Gastrocnemius medialis (tissue), 4 donors: ENCODE measurements at regions of chr19 and their contacts with region 1.

Region 1: DNA sequence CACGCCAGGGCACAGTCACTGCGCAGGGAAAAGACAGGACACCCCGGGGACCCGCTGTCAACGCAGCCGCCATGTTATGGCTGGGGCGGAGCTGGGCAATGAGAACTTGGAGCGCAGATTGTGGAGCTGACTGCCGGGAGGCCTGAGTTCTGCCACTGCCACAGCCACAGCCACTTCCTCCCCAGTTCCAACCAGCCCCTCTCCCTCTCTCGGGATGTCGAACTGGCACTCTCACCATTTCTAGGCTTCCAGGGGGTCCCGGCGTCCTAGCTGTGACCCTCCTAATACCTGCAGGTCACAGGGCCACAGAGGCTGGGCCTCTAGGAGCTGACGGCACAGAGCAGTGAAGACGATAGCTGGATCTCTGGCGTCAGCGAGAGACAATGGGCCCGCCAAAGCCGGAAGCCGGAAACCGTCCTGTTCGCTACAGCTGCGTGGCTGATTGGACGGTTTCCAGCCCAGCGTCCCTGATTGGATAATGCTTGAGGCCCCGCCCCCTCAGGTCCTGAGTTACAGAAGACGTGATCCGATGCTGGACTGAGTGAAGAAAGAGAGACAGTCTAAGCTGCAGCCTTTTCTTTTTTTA is at the start of gene ZNF506:
- DNase-seq: peak; percentile 98
- ATAC-seq: peak; percentile 99
- H3K4me3 ChIP-seq: peak within 1 kb of the TSS; percentile 66 to 87 (median 77)
- H3K27ac ChIP-seq: peak within 1 kb of the TSS; percentile 90 to 93 (median 92)
- H3K4me1 ChIP-seq: peaks cover 3 to 10% of the 10 kb centered on the region in 2 donors
- H3K27me3 ChIP-seq: no peaks in the 10 kb centered on the region
- CTCF ChIP-seq: no peak
- POLR2A ChIP-seq: peak; percentile 66 to 83
- total RNA-seq, gene ZNF506: 6.3 to 18.7 (median 14.9) TPM

Region 2: GRCh38 chr19:19434483-19435045 is 386.9 kb before region 1 on chr19:
- in situ Hi-C with region 1: no loop called
- intact Hi-C with region 1: no loop called
- DNase-seq: peak; percentile 51 to 73
- ATAC-seq: peak; percentile 93 to 94
- H3K4me3 ChIP-seq: peak overlapping the region in 1 of 4 donors; percentile 25
- H3K27ac ChIP-seq: peak overlapping the region; percentile 47 to 63 (median 56)
- H3K4me1 ChIP-seq: peaks cover 22 to 25% of the 10 kb centered on the region in 2 donors
- H3K27me3 ChIP-seq: no peaks in the 10 kb centered on the region
- CTCF ChIP-seq: no peak
- POLR2A ChIP-seq: no peak

Region 3: DNA sequence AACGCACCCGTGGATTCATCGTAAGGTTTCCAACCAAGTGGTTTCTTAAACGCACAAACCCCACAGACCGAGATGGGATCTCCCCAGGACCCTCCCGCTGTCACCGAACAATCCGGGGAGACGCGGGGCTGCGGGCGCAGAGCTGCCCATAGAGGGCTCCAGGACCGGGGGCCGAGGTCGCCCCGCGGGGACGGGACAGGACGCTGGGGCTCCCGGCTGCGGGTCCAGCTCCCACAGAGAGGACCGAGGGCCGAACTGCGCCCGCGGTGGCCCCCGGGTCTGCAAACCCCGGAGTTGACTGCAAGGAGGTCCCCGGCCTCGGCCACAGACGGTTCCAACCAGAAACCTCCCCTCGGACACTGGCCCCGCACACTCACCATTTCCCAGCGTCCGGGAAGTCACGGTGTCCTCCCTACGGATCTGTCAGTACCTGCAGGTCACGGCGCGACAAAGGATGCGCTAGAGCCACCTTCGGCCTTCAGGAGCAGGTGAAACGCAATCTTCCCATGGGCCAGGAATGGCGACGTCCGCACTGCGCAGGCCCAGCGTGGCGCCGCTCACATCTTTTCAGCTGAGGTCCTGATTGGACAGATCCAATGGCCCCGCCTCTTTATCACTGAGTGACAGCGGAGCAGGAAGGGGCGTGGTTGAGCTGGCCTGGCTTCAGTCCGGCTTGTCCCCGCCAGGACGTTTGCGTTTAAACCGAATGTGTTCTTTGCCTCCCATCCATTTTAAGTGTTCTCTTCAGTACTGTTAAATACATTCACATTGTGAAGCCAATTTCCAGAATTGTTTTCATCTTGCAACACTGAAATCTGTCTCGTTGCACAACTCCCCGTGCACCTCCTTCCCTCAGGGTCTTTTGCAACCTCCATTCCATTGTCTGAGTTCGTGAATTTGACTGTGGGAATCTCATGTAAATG is 88.6 kb before region 1 on chr19 and contains the start of gene ZNF14:
- in situ Hi-C with region 1: no loop called
- intact Hi-C with region 1: loop called (anchors 5 kb)
- DNase-seq: peak; percentile 81 to 87
- ATAC-seq: peak; percentile 99 to 100
- H3K4me3 ChIP-seq: peak within 1 kb of the TSS; percentile 75 to 99 (median 82)
- H3K27ac ChIP-seq: peak within 1 kb of the TSS; percentile 43 to 72 (median 60)
- H3K4me1 ChIP-seq: peaks cover 0 to 4% of the 10 kb centered on the region in 2 donors
- H3K27me3 ChIP-seq: no peaks in the 10 kb centered on the region
- CTCF ChIP-seq: no peak
- POLR2A ChIP-seq: peak; percentile 45 to 62
- total RNA-seq, gene ZNF14: 0.97 to 2.1 (median 1.7) TPM

Region 4: GRCh38 chr19:19865739-19866481 is 44.5 kb after region 1 on chr19 and contains the start of gene ZNF253:
- in situ Hi-C with region 1: loop called in 1 of 4 experiments (anchors 5 kb)
- intact Hi-C with region 1: loop called (anchors 2 kb)
- DNase-seq: peak; percentile 95 to 97
- ATAC-seq: peak; percentile 98 to 99
- H3K4me3 ChIP-seq: peak within 1 kb of the TSS; percentile 74 to 85 (median 80)
- H3K27ac ChIP-seq: peak within 1 kb of the TSS; percentile 93 to 96 (median 94)
- H3K4me1 ChIP-seq: peaks cover 25 to 28% of the 10 kb centered on the region in 2 donors
- H3K27me3 ChIP-seq: no peaks in the 10 kb centered on the region
- CTCF ChIP-seq: no peak
- POLR2A ChIP-seq: peak; percentile 82 to 97
- total RNA-seq, gene ZNF253: 3.1 to 9.5 (median 6.3) TPM